Activated B cell treated with CpG ODN at 0.5 μM for 24 hours (primary cell): ENCODE measurements at regions of chr17 and their contacts with region 1.

Region 1: DNA sequence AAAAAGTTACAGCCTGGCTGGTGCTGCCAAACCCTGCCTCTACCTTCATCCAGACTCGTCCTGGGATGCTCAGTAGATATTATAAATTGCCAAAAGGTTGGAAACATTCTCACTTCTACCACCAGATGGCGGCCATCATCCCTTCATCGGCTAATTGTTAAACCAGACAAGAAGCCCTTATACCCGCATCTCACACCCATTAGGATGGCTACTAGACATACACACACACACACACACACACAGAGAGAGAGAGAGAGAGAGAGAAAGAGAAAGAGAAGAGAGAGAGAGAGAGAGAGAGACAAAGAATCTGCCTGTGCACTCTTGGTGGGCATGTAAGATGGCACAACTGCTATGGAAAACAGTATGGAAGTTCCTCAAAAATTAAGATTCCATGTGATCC is 15.0 kb upstream of the SCIMP start:
- DNase-seq: no peak
- ATAC-seq: peak; percentile 91
- H3K4me3 Mint-ChIP-seq: no peak overlapping the region
- H3K27ac Mint-ChIP-seq: peak overlapping the region; percentile 72
- H3K4me1 Mint-ChIP-seq: peaks cover 52% of the 10 kb centered on the region
- H3K27me3 Mint-ChIP-seq: no peaks in the 10 kb centered on the region
- CTCF ChIP-seq: no peak

Region 2: GRCh38 chr17:5304636-5305035 is 55.0 kb after region 1 on chr17:
- CTCF ChIA-PET with region 1: interaction called, 28 read pairs
- POLR2A ChIA-PET with region 1: interaction called, 8 read pairs
- intact Hi-C with region 1: loop called (anchors 1 kb)
- DNase-seq: no peak
- ATAC-seq: no peak
- H3K4me3 Mint-ChIP-seq: no peak overlapping the region
- H3K27ac Mint-ChIP-seq: no peak overlapping the region
- H3K4me1 Mint-ChIP-seq: peaks cover 68% of the 10 kb centered on the region
- H3K27me3 Mint-ChIP-seq: no peaks in the 10 kb centered on the region
- CTCF ChIP-seq: no peak

Region 3: GRCh38 chr17:5309851-5310250 is 60.2 kb after region 1 on chr17:
- CTCF ChIA-PET with region 1: interaction called, 28 read pairs
- POLR2A ChIA-PET with region 1: interaction called, 11 read pairs
- intact Hi-C with region 1: loop called (anchors 1 kb)
- DNase-seq: no peak
- ATAC-seq: peak; percentile 31
- H3K4me3 Mint-ChIP-seq: no peak overlapping the region
- H3K27ac Mint-ChIP-seq: no peak overlapping the region
- H3K4me1 Mint-ChIP-seq: peaks cover 56% of the 10 kb centered on the region
- H3K27me3 Mint-ChIP-seq: no peaks in the 10 kb centered on the region
- CTCF ChIP-seq: no peak